ENCODE measurements at regions of chr12 and their contacts with region 1.

Region 1: DNA sequence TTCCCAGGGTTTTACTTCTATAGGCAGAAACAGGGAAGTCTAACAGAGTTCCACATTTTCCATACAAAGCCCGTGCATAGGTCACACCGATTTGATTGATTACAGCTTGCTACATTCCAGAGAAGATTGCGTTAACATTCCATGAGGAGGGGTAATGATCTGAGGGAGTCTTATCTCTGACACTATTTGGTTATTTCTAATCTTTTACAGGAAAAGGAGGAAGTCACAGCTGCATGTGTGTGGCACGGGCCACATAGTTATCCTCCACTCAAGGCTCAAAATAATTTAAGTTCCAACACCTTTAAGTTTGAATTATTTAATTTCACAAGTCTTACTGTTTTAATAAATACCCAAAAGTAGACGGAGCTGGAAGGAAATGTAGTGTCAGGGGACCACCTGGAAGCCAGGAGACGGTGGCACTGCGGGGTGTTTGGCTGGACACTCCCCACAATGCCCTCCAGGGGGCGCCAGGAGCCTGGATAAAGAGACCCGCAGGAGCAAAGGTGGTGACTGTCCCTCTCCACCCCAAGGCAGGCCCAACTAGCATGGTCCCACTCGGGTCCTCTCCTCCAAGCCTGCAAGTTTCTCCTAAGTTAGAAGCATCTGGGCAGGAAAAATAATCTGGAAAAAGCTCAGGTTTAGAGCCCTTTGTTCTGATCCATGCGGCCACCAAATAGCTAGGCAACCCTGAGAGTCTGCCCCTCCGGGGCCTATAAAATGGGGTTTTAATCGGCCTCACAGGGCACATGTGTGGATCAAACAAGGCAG is 20.2 kb downstream of the KRT8 start:
- H3K4me3 ChIP-seq: no peak overlapping the region
- H3K27ac ChIP-seq: no peak overlapping the region
- H3K4me1 ChIP-seq: no peaks in the 10 kb centered on the region
- CTCF ChIP-seq: peak; percentile 75

Region 2: DNA sequence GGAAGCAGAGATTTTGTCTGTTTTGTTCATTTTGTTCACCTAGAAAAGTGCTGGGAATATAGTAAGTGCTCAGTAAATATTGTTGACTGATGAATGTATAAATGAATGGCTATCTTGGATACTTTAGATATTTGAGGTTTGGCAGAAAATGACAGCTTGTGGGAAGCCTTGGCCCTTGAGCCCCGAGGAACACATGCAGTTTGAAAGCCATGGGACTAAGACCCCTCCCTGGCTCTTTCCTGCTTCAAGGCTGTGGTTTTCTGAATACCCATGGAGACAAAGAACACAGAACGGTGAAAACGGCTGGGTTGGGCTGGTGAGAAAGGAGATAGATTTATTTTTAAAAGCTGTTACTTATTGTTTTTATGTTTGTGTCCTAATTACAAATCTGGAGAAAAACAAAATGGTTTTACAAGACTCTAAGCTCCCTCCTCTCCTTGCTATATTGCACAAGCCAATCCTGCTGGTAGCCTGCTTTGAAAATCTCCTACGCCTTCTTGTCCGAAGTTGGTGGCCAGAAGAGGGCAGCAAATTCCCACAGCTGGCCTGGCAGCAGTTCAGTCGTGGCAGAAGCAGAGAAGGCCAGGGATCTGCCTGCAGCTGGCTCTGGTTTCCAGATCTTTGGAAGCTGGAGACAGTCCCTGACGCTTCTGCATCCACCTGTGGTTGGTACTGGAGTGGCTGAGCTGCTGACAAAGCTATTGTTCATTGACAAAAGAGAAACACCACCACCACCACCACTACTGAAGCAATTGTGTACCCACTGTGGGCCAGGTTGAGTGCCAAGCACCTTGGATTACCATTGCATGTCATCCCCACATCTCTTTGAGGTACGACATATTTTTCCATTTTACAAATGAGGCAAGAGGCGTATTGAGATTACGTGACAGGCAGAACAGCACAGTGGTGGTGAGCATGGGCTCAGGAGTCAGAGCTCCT is 512.2 kb before region 1 on chr12:
- CTCF ChIA-PET with region 1: interaction called, 200 read pairs
- POLR2A ChIA-PET with region 1: interaction called, 3 read pairs
- H3K4me3 ChIP-seq: no peak overlapping the region
- H3K27ac ChIP-seq: no peak overlapping the region
- H3K4me1 ChIP-seq: no peaks in the 10 kb centered on the region
- CTCF ChIP-seq: peak; percentile 77

Region 3: GRCh38 chr12:52924764-52925716 is 40.3 kb after region 1 on chr12:
- CTCF ChIA-PET with region 1: interaction called, 19 read pairs
- POLR2A ChIA-PET with region 1: no interaction called
- H3K4me3 ChIP-seq: no peak overlapping the region
- H3K27ac ChIP-seq: peak overlapping the region; percentile 28
- H3K4me1 ChIP-seq: peaks cover 17% of the 10 kb centered on the region
- CTCF ChIP-seq: no peak

Region 4: GRCh38 chr12:52956987-52957386 is 72.3 kb after region 1 on chr12:
- CTCF ChIA-PET with region 1: interaction called, 30 read pairs
- POLR2A ChIA-PET with region 1: no interaction called
- H3K4me3 ChIP-seq: no peak overlapping the region
- H3K27ac ChIP-seq: no peak overlapping the region
- H3K4me1 ChIP-seq: no peaks in the 10 kb centered on the region
- CTCF ChIP-seq: no peak

Region 5: DNA sequence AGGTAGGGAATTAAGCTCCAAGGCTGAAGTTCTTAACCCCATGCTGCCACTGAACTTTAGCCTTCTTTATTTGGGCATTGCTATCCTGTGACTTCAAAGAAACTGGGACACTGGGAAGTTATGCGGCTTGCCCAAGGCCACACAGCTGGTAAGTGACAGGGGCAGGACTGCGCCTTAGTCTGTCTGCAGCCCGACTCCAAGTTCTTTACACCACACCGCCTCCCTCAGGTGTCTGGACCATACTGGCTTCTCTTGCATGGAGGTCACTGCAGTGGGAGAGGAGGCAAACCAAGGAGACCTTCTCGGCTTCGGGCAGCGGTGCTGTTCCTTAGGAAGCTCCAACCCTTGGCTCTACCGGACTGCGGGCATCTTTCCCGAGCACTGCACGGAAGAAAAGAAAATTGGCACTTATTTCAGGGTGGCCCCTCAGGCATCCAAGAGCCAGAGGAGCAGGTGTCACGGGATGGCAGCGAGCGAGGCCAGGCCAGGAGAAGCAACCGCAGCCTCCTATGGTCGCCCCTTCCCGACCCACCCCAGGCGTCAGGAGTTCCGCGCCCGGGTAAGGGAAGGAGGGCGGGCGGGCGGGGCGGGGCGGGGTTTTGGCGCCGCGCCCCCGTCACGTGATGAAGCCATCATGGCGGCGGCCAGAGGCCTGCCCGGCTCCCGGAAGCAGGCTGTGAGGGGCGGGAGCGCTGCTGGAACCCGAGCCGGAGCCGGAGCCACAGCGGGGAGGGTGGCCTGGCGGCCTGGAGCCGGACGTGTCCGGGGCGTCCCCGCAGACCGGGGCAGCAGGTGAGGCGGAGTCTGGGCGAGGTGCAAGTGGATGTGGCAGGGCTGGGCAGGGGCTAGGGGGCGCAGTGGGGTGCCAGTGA is 367.0 kb after region 1 on chr12:
- CTCF ChIA-PET with region 1: no interaction called
- POLR2A ChIA-PET with region 1: no interaction called
- H3K4me3 ChIP-seq: peak overlapping the region; percentile 91
- H3K27ac ChIP-seq: peak overlapping the region; percentile 61
- H3K4me1 ChIP-seq: peaks cover 4% of the 10 kb centered on the region; the same call in 1 of the 2 replicates
- CTCF ChIP-seq: peak; percentile 92

Region 6: GRCh38 chr12:53585448-53586125 is 700.9 kb after region 1 on chr12:
- CTCF ChIA-PET with region 1: no interaction called
- POLR2A ChIA-PET with region 1: no interaction called
- H3K4me3 ChIP-seq: no peak overlapping the region
- H3K27ac ChIP-seq: no peak overlapping the region
- H3K4me1 ChIP-seq: no peaks in the 10 kb centered on the region
- CTCF ChIP-seq: no peak

Measured in HEK293 (cell line).